ENCODE measurements at regions of chr7 and their contacts with region 1.

Region 1: GRCh38 chr7:44606450-44607254 is at the start of gene OGDH:
- DNase-seq: peak; percentile 99 to 100 (median 100)
- ATAC-seq: peak; percentile 95
- H3K4me3 ChIP-seq: peak within 1 kb of the TSS; percentile 71
- H3K4me3 Mint-ChIP-seq: peak within 1 kb of the TSS; percentile 81 to 99 (median 98)
- H3K27ac ChIP-seq: peak within 1 kb of the TSS; percentile 93
- H3K27ac Mint-ChIP-seq: peak within 1 kb of the TSS; percentile 93 to 100 (median 98)
- H3K4me1 ChIP-seq: peaks cover 13 to 17% of the 10 kb centered on the region in 2 donors
- H3K4me1 Mint-ChIP-seq: peaks cover 0 to 45% (median 37%) of the 10 kb centered on the region in 7 donors
- H3K27me3 ChIP-seq: no peaks in the 10 kb centered on the region
- H3K27me3 Mint-ChIP-seq: peaks cover 0 to 20% (median 0%) of the 10 kb centered on the region in 5 donors
- total RNA-seq, gene OGDH: 43.1 to 122 (median 66.3) TPM

Region 2: GRCh38 chr7:44573464-44574286 is 33.0 kb before region 1 on chr7 and contains the start of gene DDX56:
- CTCF ChIA-PET with region 1: no interaction called
- POLR2A ChIA-PET with region 1: interaction called, 20 read pairs
- intact Hi-C with region 1: loop called in 1 of 2 experiments (anchors 1 kb)
- DNase-seq: peak; percentile 72 to 90 (median 87)
- ATAC-seq: peak; percentile 97
- H3K4me3 ChIP-seq: peak within 1 kb of the TSS; percentile 95
- H3K4me3 Mint-ChIP-seq: peak within 1 kb of the TSS; percentile 91 to 98 (median 95)
- H3K27ac ChIP-seq: peak within 1 kb of the TSS; percentile 95
- H3K27ac Mint-ChIP-seq: peak within 1 kb of the TSS; percentile 92 to 99 (median 98)
- H3K4me1 ChIP-seq: peaks cover 19 to 27% of the 10 kb centered on the region in 2 donors
- H3K4me1 Mint-ChIP-seq: peaks cover 20 to 48% (median 33%) of the 10 kb centered on the region in 7 donors
- H3K27me3 ChIP-seq: no peaks in the 10 kb centered on the region
- H3K27me3 Mint-ChIP-seq: no peaks in the 10 kb centered on the region
- total RNA-seq, gene DDX56: 82.8 to 124 (median 100.0) TPM

Region 3: DNA sequence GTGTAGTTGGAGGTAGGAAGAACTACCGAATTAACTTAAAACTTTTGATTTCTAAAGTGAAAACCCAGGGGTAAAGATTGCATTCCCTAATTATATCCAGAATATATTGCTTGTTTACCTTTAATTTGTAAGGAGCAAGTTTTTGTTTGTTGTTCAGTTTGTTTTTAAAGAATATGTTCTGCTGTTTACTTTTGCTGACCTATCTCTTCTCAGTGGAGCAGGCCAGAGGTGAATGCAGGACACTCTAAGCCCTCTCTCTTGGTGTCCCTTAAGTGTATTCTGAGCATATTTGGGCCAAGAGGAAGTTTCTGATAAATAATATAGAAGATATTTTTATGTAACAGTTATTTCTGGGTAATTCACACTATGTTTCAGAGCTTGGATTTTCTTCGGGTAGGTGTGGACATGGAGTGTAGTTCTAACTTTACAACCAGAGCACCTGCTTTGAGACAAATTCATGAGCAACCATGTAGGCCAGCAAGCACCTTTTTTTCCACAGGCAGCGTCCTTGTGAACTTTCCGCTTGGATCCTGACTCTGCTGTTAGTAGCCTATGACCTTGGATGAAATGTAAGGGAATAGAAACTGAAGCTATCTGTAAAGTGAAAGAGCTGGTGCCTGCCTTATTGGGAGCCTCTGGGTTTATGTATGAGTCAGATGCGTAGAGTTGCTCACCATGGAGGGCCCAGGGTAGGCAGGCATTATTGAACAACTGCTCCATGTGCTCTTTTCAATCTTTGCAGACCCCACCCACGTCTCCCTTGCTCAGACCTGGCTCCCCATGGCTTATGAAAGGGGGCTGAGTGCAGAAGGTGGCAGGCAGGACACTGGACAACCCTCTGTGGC is 15.9 kb after region 1 on chr7:
- CTCF ChIA-PET with region 1: no interaction called
- POLR2A ChIA-PET with region 1: interaction called, 8 read pairs
- intact Hi-C with region 1: loop called in 1 of 2 experiments (anchors 1 kb)
- DNase-seq: peak in 1 of 9 donors; percentile 44
- ATAC-seq: peak; percentile 65
- H3K4me3 ChIP-seq: peak overlapping the region; percentile 9
- H3K4me3 Mint-ChIP-seq: peak overlapping the region in 4 of 10 donors; percentile 14 to 80 (median 40)
- H3K27ac ChIP-seq: no peak overlapping the region
- H3K27ac Mint-ChIP-seq: peak overlapping the region in 8 of 9 donors; percentile 11 to 95 (median 63)
- H3K4me1 ChIP-seq: peaks cover 18 to 82% of the 10 kb centered on the region in 2 donors
- H3K4me1 Mint-ChIP-seq: peaks cover 41 to 85% (median 62%) of the 10 kb centered on the region in 7 donors
- H3K27me3 ChIP-seq: no peaks in the 10 kb centered on the region
- H3K27me3 Mint-ChIP-seq: no peaks in the 10 kb centered on the region

Region 4: DNA sequence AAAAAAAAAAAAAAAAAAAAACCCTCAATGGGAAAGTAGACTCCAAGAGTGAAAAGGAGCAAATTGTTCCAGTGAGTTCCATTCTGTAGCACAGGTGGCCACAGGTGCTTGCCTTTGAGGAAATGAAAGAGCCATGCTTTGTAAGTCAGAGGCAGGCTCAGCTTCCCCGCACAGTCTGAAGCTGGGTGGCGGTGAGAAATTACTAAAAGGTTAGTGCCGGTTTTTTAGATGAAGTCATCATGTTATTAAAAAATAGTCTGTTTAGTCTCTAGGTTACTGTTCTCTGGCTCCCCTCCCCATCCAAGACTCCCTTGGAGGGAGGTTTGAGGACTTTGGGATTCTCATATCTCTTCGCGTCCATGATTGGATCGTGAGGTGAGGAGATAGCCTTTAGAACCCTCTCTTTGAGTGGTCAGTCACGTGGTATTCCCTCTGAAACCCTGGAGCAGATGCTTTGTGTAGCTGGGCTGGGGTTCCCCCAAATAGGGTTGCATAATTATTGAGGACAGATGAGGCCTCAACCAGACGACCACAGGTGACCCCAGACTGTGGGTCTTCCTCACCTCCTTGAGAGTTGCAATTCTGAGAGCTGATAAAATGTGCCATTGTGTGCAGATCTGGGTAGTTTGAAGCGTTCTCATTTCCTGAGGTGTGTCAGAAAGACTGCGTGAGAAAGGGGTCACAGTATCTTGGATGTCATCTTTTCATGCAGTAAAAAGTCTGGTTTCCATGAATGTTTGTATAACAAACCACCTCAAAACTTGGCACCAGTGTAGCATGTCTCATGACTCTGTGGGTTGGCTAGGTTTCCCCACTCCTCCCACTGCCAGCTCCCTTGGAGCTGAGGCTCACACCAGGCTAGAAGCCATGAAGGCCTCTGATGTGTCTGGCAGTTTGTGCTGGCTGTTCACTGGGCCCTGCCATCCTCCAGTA is 26.9 kb after region 1 on chr7:
- CTCF ChIA-PET with region 1: interaction called, 4 read pairs
- POLR2A ChIA-PET with region 1: interaction called, 59 read pairs
- intact Hi-C with region 1: loop called (anchors 1 kb)
- DNase-seq: peak in 6 of 9 donors; percentile 5 to 53 (median 29)
- ATAC-seq: peak; percentile 55
- H3K4me3 ChIP-seq: no peak overlapping the region
- H3K4me3 Mint-ChIP-seq: peak overlapping the region in 5 of 10 donors; percentile 12 to 55 (median 39)
- H3K27ac ChIP-seq: peak overlapping the region; percentile 59
- H3K27ac Mint-ChIP-seq: peak overlapping the region; percentile 75 to 91 (median 86)
- H3K4me1 ChIP-seq: peaks cover 48 to 95% of the 10 kb centered on the region in 2 donors
- H3K4me1 Mint-ChIP-seq: peaks cover 53 to 89% (median 65%) of the 10 kb centered on the region in 7 donors
- H3K27me3 ChIP-seq: no peaks in the 10 kb centered on the region
- H3K27me3 Mint-ChIP-seq: no peaks in the 10 kb centered on the region

Region 5: DNA sequence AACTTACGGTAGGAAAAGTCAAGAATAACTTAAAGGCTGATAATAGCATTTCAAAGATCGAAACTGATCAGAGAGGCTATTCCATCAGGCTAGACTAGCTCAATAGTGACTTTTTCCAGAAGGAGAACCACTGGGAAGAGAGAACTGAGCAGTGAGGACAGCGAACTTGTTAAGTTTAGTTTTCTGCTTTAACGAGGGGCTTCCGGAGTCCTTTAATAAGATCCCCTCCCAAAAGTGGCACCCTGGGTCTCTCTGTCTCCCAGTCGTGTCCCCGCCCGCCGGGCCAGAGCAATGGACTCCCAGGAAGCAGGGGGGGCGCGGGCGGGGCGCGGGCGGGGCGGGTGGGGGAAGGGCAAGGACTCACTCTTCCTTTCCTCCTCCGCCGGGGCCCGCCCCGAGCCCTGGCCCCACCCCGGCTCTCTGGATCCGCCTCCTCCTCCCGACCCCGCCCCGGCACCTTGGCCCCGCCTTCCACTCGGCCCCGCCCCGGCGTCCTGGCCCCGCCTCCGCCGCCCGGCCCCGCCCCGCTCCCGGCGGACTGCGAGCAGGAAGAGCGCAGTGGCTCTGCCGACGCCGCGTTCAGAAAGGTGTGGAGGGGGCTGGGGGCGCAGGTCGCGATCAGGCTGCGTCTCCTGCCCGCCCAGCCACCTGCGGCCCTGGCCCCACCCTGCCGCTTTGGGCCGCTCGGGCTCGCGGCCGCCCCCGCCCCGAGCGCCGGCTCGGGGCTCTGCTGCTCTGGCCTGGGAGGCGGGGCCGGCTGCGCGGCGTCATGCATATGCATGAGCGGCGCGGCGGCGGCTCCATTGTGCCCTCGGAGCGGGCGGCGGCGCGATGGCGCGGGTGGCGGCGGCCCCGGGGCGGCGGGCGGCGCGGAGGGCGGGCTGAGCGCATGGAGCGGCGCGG is 141.6 kb after region 1 on chr7 and contains the start of gene ZMIZ2:
- CTCF ChIA-PET with region 1: no interaction called
- POLR2A ChIA-PET with region 1: interaction called, 22 read pairs
- intact Hi-C with region 1: loop called (anchors 1 kb)
- DNase-seq: peak; percentile 87 to 99 (median 93)
- ATAC-seq: peak; percentile 94
- H3K4me3 ChIP-seq: peak within 1 kb of the TSS; percentile 64
- H3K4me3 Mint-ChIP-seq: peak within 1 kb of the TSS; percentile 77 to 92 (median 88)
- H3K27ac ChIP-seq: peak within 1 kb of the TSS; percentile 98
- H3K27ac Mint-ChIP-seq: peak within 1 kb of the TSS; percentile 81 to 98 (median 92)
- H3K4me1 ChIP-seq: peaks cover 21 to 22% of the 10 kb centered on the region in 2 donors
- H3K4me1 Mint-ChIP-seq: peaks cover 22 to 63% (median 45%) of the 10 kb centered on the region in 7 donors
- H3K27me3 ChIP-seq: no peaks in the 10 kb centered on the region
- H3K27me3 Mint-ChIP-seq: no peaks in the 10 kb centered on the region
- total RNA-seq, gene ZMIZ2: 108 to 187 (median 144) TPM